Psoas muscle (tissue), 8 donors: ENCODE measurements at regions of chr1 and their contacts with region 1.

Region 1: GRCh38 chr1:147494998-147495580 is 46.2 kb upstream of the BCL9 start:
- DNase-seq: peak; percentile 61 to 78
- ATAC-seq: peak; percentile 89 to 97 (median 96)
- H3K4me3 ChIP-seq: no peak overlapping the region
- H3K27ac ChIP-seq: no peak overlapping the region
- H3K4me1 ChIP-seq: peaks cover 6% of the 10 kb centered on the region
- H3K27me3 ChIP-seq: no peaks in the 10 kb centered on the region
- CTCF ChIP-seq: peak; percentile 95

Region 2: GRCh38 chr1:147700042-147701006 is 205.2 kb after region 1 on chr1:
- intact Hi-C with region 1: loop called in 1 of 2 experiments (anchors 5 kb)
- DNase-seq: peak in 1 of 2 donors; percentile 24
- ATAC-seq: peak; percentile 65 to 92 (median 83)
- H3K4me3 ChIP-seq: no peak overlapping the region
- H3K27ac ChIP-seq: no peak overlapping the region
- H3K4me1 ChIP-seq: no peaks in the 10 kb centered on the region
- H3K27me3 ChIP-seq: no peaks in the 10 kb centered on the region
- CTCF ChIP-seq: peak; percentile 77